Left ventricle myocardium inferior (tissue), 1 donor: ENCODE measurements at regions of chr9 and their contacts with region 1.

Region 1: GRCh38 chr9:83334320-83334719 is 203.9 kb downstream of the FRMD3 start:
- DNase-seq: peak; percentile 83
- H3K4me3 ChIP-seq: no peak overlapping the region
- H3K27ac ChIP-seq: peak overlapping the region; percentile 24
- H3K4me1 ChIP-seq: peaks cover 11% of the 10 kb centered on the region
- H3K27me3 ChIP-seq: no peaks in the 10 kb centered on the region
- CTCF ChIP-seq: peak; percentile 96

Region 2: GRCh38 chr9:83219152-83219923 is 115.0 kb before region 1 on chr9:
- intact Hi-C with region 1: loop called (anchors 10 kb)
- DNase-seq: peak; percentile 79
- H3K4me3 ChIP-seq: peak overlapping the region; percentile 73
- H3K27ac ChIP-seq: peak overlapping the region; percentile 88
- H3K4me1 ChIP-seq: peaks cover 35% of the 10 kb centered on the region
- H3K27me3 ChIP-seq: no peaks in the 10 kb centered on the region
- CTCF ChIP-seq: peak; percentile 91

Region 3: GRCh38 chr9:83544002-83544698 is 209.8 kb after region 1 on chr9:
- intact Hi-C with region 1: loop called (anchors 5 kb)
- DNase-seq: no peak
- H3K4me3 ChIP-seq: no peak overlapping the region
- H3K27ac ChIP-seq: no peak overlapping the region
- H3K4me1 ChIP-seq: peaks cover 10% of the 10 kb centered on the region
- H3K27me3 ChIP-seq: no peaks in the 10 kb centered on the region
- CTCF ChIP-seq: peak; percentile 84